ENCODE measurements at regions of chr1 and their contacts with region 1.

Region 1: DNA sequence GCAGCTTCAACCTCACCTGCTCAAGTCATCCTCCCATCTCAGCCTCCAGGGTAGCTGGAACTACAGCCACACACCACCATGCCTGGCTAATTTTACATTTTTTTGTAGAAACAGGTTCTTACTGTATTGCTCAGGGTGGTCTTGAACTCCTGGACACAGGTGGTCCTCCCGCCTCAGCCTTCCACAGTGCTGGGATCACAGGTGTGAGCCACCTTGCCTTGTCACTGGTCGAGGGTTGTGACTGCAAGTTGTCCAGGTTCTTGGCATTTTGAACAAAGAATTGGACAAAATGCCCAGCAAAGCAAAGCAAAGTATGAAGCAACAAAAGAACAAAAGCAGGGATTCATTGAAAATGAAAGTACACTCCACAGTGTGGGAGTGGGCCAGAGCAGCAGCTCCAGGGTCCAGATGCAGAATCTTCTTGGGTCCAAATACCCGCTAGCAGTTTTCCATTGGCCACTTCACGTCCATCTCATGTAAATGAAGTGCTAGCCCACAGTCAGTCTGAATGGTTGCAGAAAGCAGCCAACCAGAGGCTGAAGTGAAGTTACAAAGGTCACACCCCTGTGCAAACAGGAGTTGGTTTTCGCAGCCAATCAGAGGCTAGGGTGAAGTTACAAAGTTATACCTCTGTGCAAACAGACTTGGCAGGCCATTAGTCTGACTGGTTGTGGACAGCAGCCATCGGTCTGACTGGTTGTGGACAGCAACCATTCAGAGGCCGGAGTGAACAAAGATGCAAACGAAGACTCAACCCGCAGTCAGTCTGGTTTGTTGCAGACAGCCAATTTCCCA is 109.5 kb upstream of the KIF26B start:
- DNase-seq: peak; percentile 53
- ATAC-seq: peak; percentile 75
- H3K4me3 ChIP-seq: no peak overlapping the region
- H3K27ac ChIP-seq: no peak overlapping the region
- H3K4me1 ChIP-seq: no peaks in the 10 kb centered on the region
- H3K27me3 ChIP-seq: no peaks in the 10 kb centered on the region
- CTCF ChIP-seq: no peak

Region 2: DNA sequence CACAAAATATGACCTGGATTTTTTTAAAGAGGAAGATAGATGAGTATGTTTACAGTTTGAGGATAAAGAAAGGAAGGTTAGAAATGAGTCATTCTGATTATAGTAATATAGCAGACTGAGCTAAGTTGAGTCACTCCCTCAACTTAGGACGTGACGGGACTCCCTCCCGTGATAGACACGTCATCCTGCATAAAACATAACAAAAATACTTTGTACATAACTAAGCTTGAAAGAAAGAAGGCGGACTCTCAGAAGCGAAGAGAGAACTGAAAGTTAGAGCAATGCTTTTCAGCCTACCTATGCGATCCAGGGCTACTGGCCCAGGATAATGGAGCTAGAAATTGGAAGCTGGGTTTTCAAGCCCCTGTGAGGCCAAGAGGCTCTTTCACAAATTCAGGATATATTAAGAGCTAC is 445.3 kb before region 1 on chr1:
- CTCF ChIA-PET with region 1: interaction called, 3 read pairs
- POLR2A ChIA-PET with region 1: no interaction called
- intact Hi-C with region 1: loop called (anchors 1 kb)
- DNase-seq: peak; percentile 98
- ATAC-seq: peak; percentile 95
- H3K4me3 ChIP-seq: peak overlapping the region; percentile 65
- H3K27ac ChIP-seq: peak overlapping the region; percentile 55
- H3K4me1 ChIP-seq: peaks cover 13% of the 10 kb centered on the region
- H3K27me3 ChIP-seq: no peaks in the 10 kb centered on the region
- CTCF ChIP-seq: no peak

Region 3: DNA sequence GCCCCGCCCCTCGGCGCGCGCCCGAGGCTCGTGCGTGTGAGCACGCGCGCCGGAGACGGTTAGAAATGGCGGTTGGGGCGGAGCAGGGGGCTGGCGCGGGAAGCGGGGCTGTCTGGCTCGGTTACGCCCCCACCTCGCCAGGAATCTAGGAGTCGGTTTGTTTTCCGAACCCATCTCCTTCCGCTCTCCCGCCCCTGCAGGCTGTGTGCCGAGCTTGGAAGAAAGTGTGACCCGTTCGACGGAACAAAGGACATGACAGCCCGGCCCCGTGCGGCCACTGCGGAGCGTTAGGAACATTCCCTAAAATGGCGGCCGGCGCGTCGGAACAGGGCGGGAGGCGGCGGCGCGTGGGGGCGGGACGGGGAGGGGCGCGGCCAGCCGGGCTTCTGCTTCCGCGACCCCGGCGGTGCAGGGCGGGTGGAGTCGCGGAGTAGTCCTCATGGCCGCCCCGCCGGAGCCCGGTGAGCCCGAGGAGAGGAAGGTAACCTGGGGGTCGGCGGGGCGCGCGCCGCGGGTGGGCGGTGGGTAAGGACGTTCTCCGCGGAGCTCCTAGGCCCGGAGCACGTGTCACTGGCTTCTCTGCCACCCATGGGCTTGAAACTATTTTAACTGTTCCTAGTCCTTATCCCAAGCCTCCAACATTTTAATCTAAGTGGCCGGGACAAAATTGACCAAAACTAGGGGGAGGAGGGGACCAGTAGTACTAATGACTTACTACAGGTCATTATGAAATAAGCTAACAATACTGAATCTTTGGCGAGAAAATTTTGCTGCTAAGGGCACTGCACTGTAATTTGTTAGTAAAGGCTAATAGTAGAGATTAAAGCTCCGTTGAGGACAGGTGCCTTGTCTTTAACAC is 209.8 kb before region 1 on chr1 and contains the start of gene COX20:
- CTCF ChIA-PET with region 1: interaction called, 8 read pairs
- POLR2A ChIA-PET with region 1: no interaction called
- intact Hi-C with region 1: loop called (anchors 1 kb)
- DNase-seq: peak; percentile 95
- ATAC-seq: peak; percentile 59
- H3K4me3 ChIP-seq: peak within 1 kb of the TSS; percentile 94
- H3K27ac ChIP-seq: peak within 1 kb of the TSS; percentile 91
- H3K4me1 ChIP-seq: peaks cover 47% of the 10 kb centered on the region
- H3K27me3 ChIP-seq: no peaks in the 10 kb centered on the region
- CTCF ChIP-seq: no peak
- total RNA-seq, gene COX20: 50.0 and 55.8 TPM in 2 replicates

Region 4: DNA sequence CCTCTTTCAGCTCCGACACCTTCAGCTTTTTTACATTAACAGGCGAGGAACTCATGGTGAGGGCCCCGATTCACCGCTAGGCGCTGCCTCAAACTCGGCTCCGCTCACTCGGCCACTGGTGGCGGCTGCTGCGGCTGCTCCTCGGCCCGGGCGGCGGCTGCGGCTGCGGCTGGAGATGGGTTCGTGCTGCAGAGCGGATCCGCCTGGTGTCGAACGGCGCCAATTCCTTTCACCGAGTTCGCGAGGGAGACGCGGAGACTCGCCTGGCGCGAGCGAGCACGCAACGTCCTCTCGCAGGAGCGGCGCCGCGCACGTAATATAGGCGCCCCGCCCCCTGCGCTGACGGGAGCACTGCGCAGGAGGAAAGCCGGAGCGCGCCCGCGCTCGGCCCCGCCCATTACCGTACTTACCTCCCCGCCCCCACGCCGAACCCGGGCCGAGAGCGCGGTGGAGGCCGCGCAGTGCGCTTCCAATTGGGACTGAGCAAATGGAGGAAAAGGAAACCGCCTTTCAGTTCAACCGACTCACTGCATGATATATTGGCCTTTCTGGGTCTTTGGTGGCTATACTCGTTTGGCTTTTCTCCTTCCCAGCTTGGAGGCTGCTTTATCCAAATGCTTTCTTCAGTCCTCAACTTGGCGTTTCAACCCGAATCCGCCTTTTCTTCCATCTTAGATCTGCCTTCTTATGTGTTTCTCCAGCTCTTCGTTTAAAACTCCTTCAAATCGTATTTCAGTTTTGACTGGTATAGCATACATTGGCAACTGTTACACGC is 180.8 kb before region 1 on chr1 and contains the start of gene HNRNPU:
- CTCF ChIA-PET with region 1: interaction called, 6 read pairs
- POLR2A ChIA-PET with region 1: no interaction called
- intact Hi-C with region 1: loop called (anchors 1 kb)
- DNase-seq: peak; percentile 99
- ATAC-seq: peak; percentile 74
- H3K4me3 ChIP-seq: peak within 1 kb of the TSS; percentile 80
- H3K27ac ChIP-seq: peak within 1 kb of the TSS; percentile 72
- H3K4me1 ChIP-seq: peaks cover 24% of the 10 kb centered on the region
- H3K27me3 ChIP-seq: no peaks in the 10 kb centered on the region
- CTCF ChIP-seq: no peak; the same call in 1 of the 2 replicates
- total RNA-seq, gene HNRNPU: 431 and 503 TPM in 2 replicates

Region 5: GRCh38 chr1:244887281-244887680 is 158.0 kb before region 1 on chr1:
- CTCF ChIA-PET with region 1: interaction called, 11 read pairs
- POLR2A ChIA-PET with region 1: no interaction called
- intact Hi-C with region 1: no loop called
- DNase-seq: peak; percentile 75
- ATAC-seq: no peak
- H3K4me3 ChIP-seq: no peak overlapping the region
- H3K27ac ChIP-seq: no peak overlapping the region
- H3K4me1 ChIP-seq: peaks cover under 1% of the 10 kb centered on the region
- H3K27me3 ChIP-seq: no peaks in the 10 kb centered on the region
- CTCF ChIP-seq: no peak

Region 6: GRCh38 chr1:244970661-244971551 is 74.4 kb before region 1 on chr1:
- CTCF ChIA-PET with region 1: interaction called, 6 read pairs
- POLR2A ChIA-PET with region 1: no interaction called
- intact Hi-C with region 1: loop called (anchors 1 kb)
- DNase-seq: peak; percentile 96
- ATAC-seq: peak; percentile 66
- H3K4me3 ChIP-seq: peak overlapping the region; percentile 74
- H3K27ac ChIP-seq: peak overlapping the region; percentile 95
- H3K4me1 ChIP-seq: peaks cover 17% of the 10 kb centered on the region
- H3K27me3 ChIP-seq: no peaks in the 10 kb centered on the region
- CTCF ChIP-seq: peak; percentile 65

Region 7: GRCh38 chr1:244980605-244981004 is 64.7 kb before region 1 on chr1:
- CTCF ChIA-PET with region 1: interaction called, 13 read pairs
- POLR2A ChIA-PET with region 1: no interaction called
- intact Hi-C with region 1: no loop called
- DNase-seq: no peak
- ATAC-seq: no peak
- H3K4me3 ChIP-seq: no peak overlapping the region
- H3K27ac ChIP-seq: no peak overlapping the region
- H3K4me1 ChIP-seq: no peaks in the 10 kb centered on the region
- H3K27me3 ChIP-seq: no peaks in the 10 kb centered on the region
- CTCF ChIP-seq: no peak

Measured in PC-3 (cell line).